Ascending aorta (tissue), 2 donors: ENCODE measurements at regions of chr20 and their contacts with region 1.

Region 1: GRCh38 chr20:38434743-38435554 is at the start of gene SNHG17:
- DNase-seq: peak; percentile 41 to 95
- H3K4me3 ChIP-seq: peak within 1 kb of the TSS; percentile 61 to 74
- H3K27ac ChIP-seq: peak within 1 kb of the TSS; percentile 72 to 87
- H3K4me1 ChIP-seq: no peaks in the 10 kb centered on the region
- H3K27me3 ChIP-seq: no peaks in the 10 kb centered on the region
- CTCF ChIP-seq: peak; percentile 99 to 100 (median 100)
- total RNA-seq, gene SNHG17: 129 TPM

Region 2: GRCh38 chr20:38033310-38034107 is 401.4 kb before region 1 on chr20 and contains the starts of genes RPRD1B and TTI1:
- intact Hi-C with region 1: loop called (anchors 10 kb)
- DNase-seq: peak; percentile 60 to 95
- H3K4me3 ChIP-seq: peak within 1 kb of the TSS; percentile 95 to 100
- H3K27ac ChIP-seq: peak within 1 kb of the TSS; percentile 97
- H3K4me1 ChIP-seq: peaks cover 16 to 27% of the 10 kb centered on the region in 2 donors
- H3K27me3 ChIP-seq: no peaks in the 10 kb centered on the region
- CTCF ChIP-seq: no peak
- total RNA-seq, gene RPRD1B: 16.4 TPM
- total RNA-seq, gene TTI1: 18.0 TPM

Region 3: GRCh38 chr20:38446441-38447209 is 11.7 kb after region 1 on chr20:
- intact Hi-C with region 1: loop called (anchors 1 kb)
- DNase-seq: peak; percentile 36 to 93
- H3K4me3 ChIP-seq: peak overlapping the region; percentile 91 to 97
- H3K27ac ChIP-seq: peak overlapping the region; percentile 83 to 93
- H3K4me1 ChIP-seq: peaks cover 4 to 10% of the 10 kb centered on the region in 2 donors
- H3K27me3 ChIP-seq: no peaks in the 10 kb centered on the region
- CTCF ChIP-seq: peak; percentile 88 to 98 (median 89)

Region 4: GRCh38 chr20:38472513-38473372 is 37.8 kb after region 1 on chr20 and contains the start of gene RALGAPB:
- intact Hi-C with region 1: loop called (anchors 2 kb)
- DNase-seq: peak; percentile 96 to 100
- H3K4me3 ChIP-seq: peak within 1 kb of the TSS; percentile 93 to 99
- H3K27ac ChIP-seq: peak within 1 kb of the TSS; percentile 88 to 93
- H3K4me1 ChIP-seq: peaks cover 12 to 15% of the 10 kb centered on the region in 2 donors
- H3K27me3 ChIP-seq: no peaks in the 10 kb centered on the region
- CTCF ChIP-seq: peak in 2 of 3 experiments; percentile 43 to 46
- total RNA-seq, gene RALGAPB: 19.4 TPM